Lower leg skin (tissue), 4 donors: ENCODE measurements at regions of chr5 and their contacts with region 1.

Region 1: DNA sequence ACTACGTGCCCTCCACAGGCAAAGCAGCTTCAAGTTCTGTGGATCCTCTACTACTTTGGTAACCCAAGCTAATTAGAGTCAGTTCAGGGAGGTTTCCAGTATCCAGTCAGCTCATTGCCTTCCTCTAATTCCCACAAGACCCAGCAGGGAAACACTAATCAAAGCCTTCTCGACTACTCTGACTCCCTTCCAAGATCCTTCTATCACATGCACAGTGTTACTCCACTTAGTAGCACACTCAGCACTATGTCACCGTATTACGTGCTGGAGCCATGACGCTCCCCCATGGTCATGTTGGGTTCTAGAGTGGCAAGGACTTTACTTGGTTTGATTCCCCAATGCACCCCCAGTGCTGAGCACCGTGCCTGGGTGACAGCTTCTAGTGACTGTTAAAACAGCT is 53.0 kb downstream of the DCP2 start:
- DNase-seq: no peak
- H3K4me3 ChIP-seq: no peak overlapping the region
- CTCF ChIP-seq: no peak
- POLR2A ChIP-seq: no peak

Region 2: DNA sequence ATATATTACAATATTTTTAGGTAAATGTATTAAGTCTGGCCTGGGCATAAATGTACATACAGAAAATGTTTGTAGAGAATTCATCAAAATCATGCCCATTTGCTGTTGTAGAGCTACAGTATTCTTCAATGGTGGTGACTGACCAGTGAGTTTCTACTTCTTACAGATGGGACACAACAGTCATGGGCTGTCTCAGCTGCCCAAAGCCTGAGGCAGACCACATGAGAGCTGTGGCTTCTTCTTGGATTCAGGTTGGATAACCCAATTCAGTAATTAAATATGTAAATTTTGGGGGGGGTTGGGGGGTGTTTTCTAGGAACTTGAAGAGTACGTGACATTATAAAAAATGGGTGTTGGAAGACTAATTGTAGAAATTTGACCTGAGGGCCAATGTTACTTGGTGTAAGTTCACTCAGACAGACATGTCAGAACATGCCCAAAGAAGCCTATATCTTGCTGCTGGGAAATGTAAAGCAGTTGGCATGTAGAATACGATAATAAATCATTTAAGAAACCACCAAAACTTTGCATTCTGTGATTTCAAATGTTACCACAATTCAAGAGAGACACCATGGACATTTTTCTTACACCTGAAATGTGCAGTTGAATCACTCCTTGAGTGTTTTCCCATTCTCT is 1535.1 kb before region 1 on chr5:
- intact Hi-C with region 1: no loop called
- DNase-seq: no peak
- H3K4me3 ChIP-seq: no peak overlapping the region
- CTCF ChIP-seq: no peak
- POLR2A ChIP-seq: no peak

Region 3: GRCh38 chr5:112192866-112193265 is 836.7 kb before region 1 on chr5:
- intact Hi-C with region 1: loop called (anchors 5 kb)
- DNase-seq: no peak
- H3K4me3 ChIP-seq: no peak overlapping the region
- CTCF ChIP-seq: no peak
- POLR2A ChIP-seq: no peak

Region 4: DNA sequence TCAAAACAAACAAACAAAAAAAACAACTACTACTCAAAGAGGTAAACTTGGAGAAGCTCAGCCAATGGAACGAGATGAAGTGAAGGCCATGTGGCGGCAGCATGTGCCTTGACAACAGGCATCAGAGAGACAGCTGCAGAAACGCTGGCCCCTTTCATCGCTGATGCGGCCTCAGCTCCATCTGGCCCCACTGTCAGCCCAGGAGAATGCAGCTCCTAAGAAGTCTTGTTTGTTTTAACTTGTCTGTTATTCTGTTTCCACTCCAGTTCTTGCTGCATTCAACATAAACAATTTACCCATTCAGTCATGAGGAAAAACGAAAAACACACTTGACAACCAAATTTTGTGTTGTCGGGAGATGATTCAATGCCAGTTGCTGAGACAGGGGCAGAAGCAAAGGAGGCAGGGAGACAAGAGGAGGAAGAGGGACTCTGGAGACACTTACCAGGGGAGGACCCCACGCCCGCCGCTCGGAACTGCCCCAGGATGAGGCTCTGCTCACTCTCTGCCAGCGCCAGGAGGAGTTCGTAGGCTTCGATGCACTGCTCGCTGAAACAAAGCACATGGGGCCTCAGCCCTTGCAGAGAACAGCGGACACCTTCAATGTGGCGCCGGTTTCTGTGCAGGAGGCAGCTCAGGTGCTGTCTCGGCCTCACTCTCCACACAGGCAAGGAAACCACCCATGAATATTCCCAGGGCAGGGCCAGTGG is 38.2 kb after region 1 on chr5:
- intact Hi-C with region 1: no loop called
- DNase-seq: peak in 1 of 2 donors; percentile 60
- H3K4me3 ChIP-seq: no peak overlapping the region
- CTCF ChIP-seq: no peak
- POLR2A ChIP-seq: no peak